ENCODE measurements at regions of chr9 and their contacts with region 1.

Region 1: DNA sequence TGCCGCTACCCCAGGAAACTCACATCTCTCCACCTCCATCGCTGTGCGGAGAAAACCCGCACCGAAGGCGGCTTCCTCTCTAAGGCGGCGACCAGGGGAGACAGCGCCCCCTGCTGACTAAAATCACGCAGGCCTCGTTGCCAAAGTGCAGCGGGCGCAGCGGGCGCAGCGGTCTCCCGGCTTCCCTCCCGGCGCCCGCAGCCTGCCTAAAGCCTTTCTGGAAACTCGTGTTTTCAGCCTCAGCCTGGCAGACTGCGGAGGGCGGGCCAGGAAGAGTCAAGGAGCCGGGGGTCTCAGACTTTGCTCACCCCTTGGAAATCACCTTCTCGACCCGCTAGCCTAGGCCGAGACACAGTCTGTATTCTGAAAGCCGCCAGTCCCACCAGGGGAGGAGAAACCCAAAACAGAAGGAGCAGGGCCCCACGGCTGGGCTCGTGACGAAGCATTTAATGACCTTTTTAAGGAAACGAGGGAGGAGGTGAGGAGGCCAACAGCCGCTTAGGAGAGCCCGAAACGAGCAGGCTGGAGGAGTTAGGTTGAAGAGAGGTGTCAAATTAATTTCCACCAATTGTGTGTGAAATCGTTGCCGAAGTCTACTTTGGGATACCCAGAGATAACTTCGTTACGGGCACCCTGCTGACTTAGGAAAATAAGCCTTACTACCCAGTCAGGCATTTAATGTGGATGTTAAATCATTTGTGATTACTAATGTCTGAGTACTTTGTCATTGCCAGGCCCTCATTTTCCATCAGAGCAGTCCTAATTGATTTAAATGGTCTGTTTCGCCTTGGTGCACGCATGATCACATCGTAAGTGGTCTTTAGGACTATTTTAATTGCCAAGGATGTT is 7.3 kb upstream of the FOXB2 start:
- DNase-seq: peak in 33 of 35 experiments; percentile 8 to 67 (median 39)
- ATAC-seq: peak in 3 of 4 experiments; percentile 64 to 68 (median 66)
- H3K4me3 ChIP-seq: peak overlapping the region in 1 of 2 donors; percentile 29
- H3K4me3 Mint-ChIP-seq: peak overlapping the region in 2 of 3 donors; percentile 11 to 66
- H3K27ac ChIP-seq: no peak overlapping the region
- H3K27ac Mint-ChIP-seq: no peak overlapping the region
- H3K4me1 ChIP-seq: peaks cover 0 to 12% of the 10 kb centered on the region in 2 experiments
- H3K4me1 Mint-ChIP-seq: peaks cover 6 to 15% (median 8%) of the 10 kb centered on the region in 3 donors
- H3K27me3 ChIP-seq: peaks cover 31 to 50% of the 10 kb centered on the region in 2 experiments
- H3K27me3 Mint-ChIP-seq: peaks cover 56 to 77% of the 10 kb centered on the region in 2 donors

Region 2: GRCh38 chr9:75918154-75918553 is 1094.0 kb before region 1 on chr9:
- CTCF ChIA-PET with region 1: no interaction called
- POLR2A ChIA-PET with region 1: no interaction called
- DNase-seq: no peak
- ATAC-seq: no peak
- H3K4me3 ChIP-seq: no peak overlapping the region
- H3K4me3 Mint-ChIP-seq: no peak overlapping the region
- H3K27ac ChIP-seq: no peak overlapping the region
- H3K27ac Mint-ChIP-seq: no peak overlapping the region
- H3K4me1 ChIP-seq: no peaks in the 10 kb centered on the region
- H3K4me1 Mint-ChIP-seq: peaks cover 24 to 54% (median 53%) of the 10 kb centered on the region in 3 donors
- H3K27me3 ChIP-seq: no peaks in the 10 kb centered on the region
- H3K27me3 Mint-ChIP-seq: no peaks in the 10 kb centered on the region

Region 3: DNA sequence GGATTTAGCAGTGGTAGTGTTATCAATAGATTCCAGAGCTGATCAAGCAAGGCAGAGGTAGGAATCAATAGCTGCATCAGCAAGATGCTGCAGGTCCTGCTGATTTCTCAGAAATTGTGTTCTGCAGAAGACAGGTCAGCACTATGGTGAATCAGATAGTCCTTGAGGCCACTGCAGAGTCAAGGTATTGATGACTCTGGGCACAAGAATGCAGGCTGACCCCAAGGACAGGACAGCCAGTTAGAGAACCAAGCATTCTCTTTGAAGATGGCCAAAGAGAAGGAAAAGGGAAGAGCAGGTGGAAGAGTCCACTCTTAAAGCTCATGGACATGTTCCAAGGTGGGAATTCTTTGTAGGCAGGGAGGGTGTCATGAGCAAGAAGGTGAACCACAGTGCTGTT is 134.2 kb before region 1 on chr9:
- CTCF ChIA-PET with region 1: interaction called in 1 of 2 experiments, 12 read pairs
- POLR2A ChIA-PET with region 1: no interaction called
- DNase-seq: no peak
- ATAC-seq: no peak
- H3K4me3 ChIP-seq: no peak overlapping the region
- H3K4me3 Mint-ChIP-seq: no peak overlapping the region
- H3K27ac ChIP-seq: no peak overlapping the region
- H3K27ac Mint-ChIP-seq: no peak overlapping the region
- H3K4me1 ChIP-seq: no peaks in the 10 kb centered on the region
- H3K4me1 Mint-ChIP-seq: no peaks in the 10 kb centered on the region
- H3K27me3 ChIP-seq: no peaks in the 10 kb centered on the region
- H3K27me3 Mint-ChIP-seq: peaks cover 4 to 14% of the 10 kb centered on the region in 2 donors